SK-N-SH (cell line): ENCODE measurements at regions of chr20 and their contacts with region 1.

Region 1: GRCh38 chr20:10309326-10309725 is 90.7 kb downstream of the SNAP25 start:
- DNase-seq: peak; percentile 69
- H3K4me3 ChIP-seq: peak overlapping the region in 1 of 2 experiments; percentile 21; a peak in 1 of 4 replicates
- H3K27ac ChIP-seq: peak overlapping the region; percentile 86 to 95
- H3K4me1 ChIP-seq: peaks cover 31 to 34% of the 10 kb centered on the region in 2 experiments
- H3K27me3 ChIP-seq: no peaks in the 10 kb centered on the region
- CTCF ChIP-seq: no peak
- EP300 ChIP-seq: peak; percentile 100
- RAD21 ChIP-seq: no peak; the same call in 1 of the 2 replicates

Region 2: DNA sequence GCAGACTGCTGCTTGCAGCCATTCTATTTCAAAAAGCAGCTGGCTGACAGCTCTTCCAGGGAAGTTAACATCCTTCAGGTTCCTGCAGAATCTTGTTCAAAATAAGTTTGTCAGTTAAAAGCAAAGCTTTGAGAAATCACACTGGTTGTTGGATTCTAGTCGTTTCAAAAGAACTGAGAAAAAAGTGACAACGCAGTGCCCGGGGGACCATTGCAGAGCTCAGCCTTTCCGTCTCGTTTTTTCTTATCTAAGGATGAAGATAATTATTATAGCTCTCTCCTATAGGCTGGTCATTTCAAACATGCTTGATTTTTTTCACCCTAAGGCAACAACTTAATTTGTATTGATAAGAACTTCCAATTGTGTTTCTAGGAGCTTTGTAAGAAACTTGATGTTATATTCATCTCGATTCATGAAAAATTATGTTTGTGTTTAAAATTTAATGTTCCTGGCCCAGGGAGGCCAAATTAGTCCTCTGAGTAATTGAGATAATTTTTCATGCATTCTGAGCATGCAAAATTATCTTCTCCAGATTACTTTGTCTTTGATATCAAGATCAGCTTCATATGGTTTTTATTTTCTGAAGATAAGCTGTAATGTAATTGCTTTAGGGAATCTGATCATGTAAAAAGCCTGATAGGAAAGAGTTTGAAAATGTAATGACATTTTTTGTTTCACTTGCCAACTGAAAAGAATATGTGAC is 32.3 kb before region 1 on chr20:
- CTCF ChIA-PET with region 1: interaction called, 3 read pairs
- POLR2A ChIA-PET with region 1: interaction called, 21 read pairs
- DNase-seq: peak; percentile 66
- H3K4me3 ChIP-seq: no peak overlapping the region
- H3K27ac ChIP-seq: peak overlapping the region in 1 of 2 experiments; percentile 94; a peak in 2 of 4 replicates
- H3K4me1 ChIP-seq: peaks cover 0 to 26% of the 10 kb centered on the region in 2 experiments; a peak in 2 of 4 replicates
- H3K27me3 ChIP-seq: no peaks in the 10 kb centered on the region
- CTCF ChIP-seq: no peak
- EP300 ChIP-seq: peak in 1 of 2 experiments; percentile 91; a peak in 2 of 4 replicates
- RAD21 ChIP-seq: no peak